ENCODE measurements at regions of chr7 and their contacts with region 1.

Region 1: GRCh38 chr7:22660732-22661131 is 66.3 kb upstream of the IL6 start:
- DNase-seq: no peak
- H3K4me3 ChIP-seq: no peak overlapping the region
- H3K27ac ChIP-seq: no peak overlapping the region
- H3K4me1 ChIP-seq: no peaks in the 10 kb centered on the region
- H3K27me3 ChIP-seq: no peaks in the 10 kb centered on the region
- CTCF ChIP-seq: no peak
- POLR2A ChIP-seq: no peak

Region 2: DNA sequence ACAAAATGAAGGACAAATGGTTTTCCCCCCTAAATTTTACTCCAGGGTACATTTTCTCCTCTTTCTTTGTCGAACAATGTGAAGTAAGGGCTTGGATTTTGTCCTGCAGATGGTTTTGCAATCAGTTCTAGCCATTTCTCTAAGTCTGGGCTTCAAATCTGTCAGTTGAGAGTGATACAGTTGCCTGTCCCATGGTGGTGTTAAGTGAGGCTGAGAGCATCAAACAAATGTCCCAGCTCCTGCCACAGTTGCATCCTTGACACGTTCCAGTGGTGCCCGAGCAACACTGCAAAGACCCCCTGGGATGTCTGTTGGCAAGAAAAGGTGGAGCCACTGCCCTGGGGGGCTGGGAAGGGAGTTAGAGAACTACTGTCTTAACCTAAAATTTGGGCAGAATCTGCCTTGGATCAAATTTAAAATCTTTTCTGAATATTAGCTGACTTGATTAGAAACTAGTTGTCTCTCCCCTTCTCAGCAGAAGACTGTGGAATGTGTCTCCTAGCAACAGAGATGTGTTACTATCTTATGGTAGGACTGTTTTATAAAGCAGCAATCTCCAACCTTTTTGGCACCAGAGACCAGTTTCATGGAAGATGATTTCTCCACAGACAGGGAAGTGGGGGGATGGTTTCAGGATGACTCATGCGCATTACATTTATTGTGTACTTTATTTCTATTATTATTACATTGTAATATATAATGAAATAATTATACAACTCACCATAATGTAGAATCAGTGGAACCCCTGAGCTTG is 58.7 kb before region 1 on chr7:
- intact Hi-C with region 1: loop called (anchors 10 kb)
- DNase-seq: peak in 1 of 2 donors; percentile 33
- H3K4me3 ChIP-seq: no peak overlapping the region
- H3K27ac ChIP-seq: peak overlapping the region in 1 of 2 donors; percentile 33
- H3K4me1 ChIP-seq: peaks cover 0 to 9% of the 10 kb centered on the region in 2 donors
- H3K27me3 ChIP-seq: no peaks in the 10 kb centered on the region
- CTCF ChIP-seq: no peak
- POLR2A ChIP-seq: no peak

Region 3: GRCh38 chr7:22672846-22673652 is 12.3 kb after region 1 on chr7:
- intact Hi-C with region 1: no loop called
- DNase-seq: no peak
- H3K4me3 ChIP-seq: no peak overlapping the region
- H3K27ac ChIP-seq: no peak overlapping the region
- H3K4me1 ChIP-seq: no peaks in the 10 kb centered on the region
- H3K27me3 ChIP-seq: no peaks in the 10 kb centered on the region
- CTCF ChIP-seq: no peak
- POLR2A ChIP-seq: no peak

Measured in uterus (tissue), 4 donors.